HEK293T (cell line): ENCODE measurements at regions of chr14 and their contacts with region 1.

Region 1: DNA sequence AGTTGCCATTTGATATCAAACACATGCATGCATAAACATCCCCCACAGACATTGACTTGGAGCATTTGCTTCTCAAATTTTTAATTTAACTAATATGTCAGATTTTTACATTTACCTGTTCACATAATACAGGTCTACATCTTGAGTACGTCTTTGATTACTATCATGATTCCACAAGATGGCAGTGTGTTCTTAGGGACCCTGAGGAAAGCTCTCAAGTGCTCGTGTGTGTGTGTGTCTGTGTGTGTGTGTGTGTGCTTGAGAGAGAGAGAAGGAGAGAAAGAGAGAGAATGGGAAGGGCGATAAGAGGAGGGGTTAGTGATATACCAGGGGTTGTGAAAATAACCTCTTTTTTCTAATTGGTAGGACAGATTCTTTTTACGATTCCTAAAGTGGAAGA is 167.1 kb upstream of the OR4E1 start:
- DNase-seq: no peak

Region 2: DNA sequence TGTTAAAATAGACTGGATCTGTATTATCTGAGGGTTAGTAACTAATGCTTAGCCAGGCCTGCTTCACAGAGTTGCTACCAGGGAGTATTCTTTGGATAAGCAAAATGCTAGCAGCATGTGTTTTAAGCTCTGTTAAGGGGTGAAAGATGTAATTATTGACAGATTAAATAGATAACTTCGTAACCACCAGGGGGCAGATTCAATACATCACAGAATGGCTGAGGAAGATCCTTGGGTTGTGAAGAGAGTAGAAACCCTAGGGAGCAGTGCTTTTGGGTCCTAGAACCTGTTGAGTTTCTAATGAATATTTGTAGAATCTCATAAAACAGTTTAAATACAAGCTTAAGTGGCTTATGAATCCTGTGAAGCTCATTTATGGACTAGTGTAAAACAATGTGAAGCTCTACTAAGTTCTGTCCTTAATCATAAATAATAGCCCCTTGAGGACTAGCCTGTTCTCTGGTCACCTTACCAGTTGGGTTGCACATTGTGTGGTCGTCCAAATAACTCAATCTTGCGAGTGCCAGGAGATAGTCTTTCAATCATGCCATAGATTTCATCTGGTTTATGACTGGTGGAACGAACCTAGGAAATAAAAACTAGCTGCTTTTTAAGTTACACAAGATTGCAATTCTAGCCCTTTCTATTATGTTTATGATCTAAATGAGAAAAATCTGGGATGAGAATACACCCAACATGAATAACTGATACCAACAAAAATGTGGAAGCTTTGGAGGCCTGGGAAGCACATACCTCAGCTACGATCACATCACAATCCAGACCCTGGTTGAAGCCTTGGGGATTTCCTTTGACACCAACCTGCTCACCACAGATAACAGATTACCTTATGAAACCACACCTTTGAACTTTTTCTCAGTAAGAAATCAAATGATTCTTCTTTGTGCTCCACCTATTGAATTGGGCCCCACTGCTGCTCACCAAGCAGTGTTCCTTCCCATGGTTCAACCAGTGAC is 341.9 kb before region 1 on chr14:
- CTCF ChIA-PET with region 1: no interaction called
- POLR2A ChIA-PET with region 1: no interaction called
- DNase-seq: peak; percentile 36

Region 3: DNA sequence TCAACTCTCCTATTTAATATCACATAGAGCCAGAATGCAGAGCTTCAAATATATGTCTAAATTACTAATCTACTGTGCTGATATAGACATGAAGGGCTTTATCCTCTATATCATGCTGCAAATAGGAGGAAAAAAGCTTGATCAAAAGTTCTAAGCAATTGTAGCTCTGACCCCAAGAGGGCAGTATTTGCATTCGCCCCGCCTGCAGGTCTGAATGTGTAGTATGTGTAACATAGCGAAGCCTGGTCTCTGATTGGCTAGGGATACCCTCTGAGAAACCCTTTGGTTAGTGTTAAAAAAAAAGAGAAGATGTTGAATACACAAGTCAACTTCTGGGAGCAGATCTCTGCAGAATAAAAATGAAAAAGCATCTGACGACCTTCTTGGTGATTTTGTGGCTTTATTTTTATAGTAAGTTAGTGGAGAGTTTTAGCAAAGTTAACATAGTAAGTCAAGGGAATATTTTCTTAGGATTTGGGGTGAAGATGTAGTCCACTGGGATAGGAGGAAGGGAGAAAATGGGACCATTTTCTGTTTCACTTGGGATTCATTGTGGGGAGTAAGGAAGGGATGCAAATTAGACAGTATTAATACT is 15.5 kb before region 1 on chr14:
- CTCF ChIA-PET with region 1: interaction called, 10 read pairs
- POLR2A ChIA-PET with region 1: no interaction called
- DNase-seq: peak; percentile 59

Region 4: GRCh38 chr14:21917699-21918436 is 77.1 kb after region 1 on chr14:
- CTCF ChIA-PET with region 1: no interaction called
- POLR2A ChIA-PET with region 1: no interaction called
- DNase-seq: peak; percentile 45